ENCODE measurements at regions of chr2 and their contacts with region 1.

Region 1: DNA sequence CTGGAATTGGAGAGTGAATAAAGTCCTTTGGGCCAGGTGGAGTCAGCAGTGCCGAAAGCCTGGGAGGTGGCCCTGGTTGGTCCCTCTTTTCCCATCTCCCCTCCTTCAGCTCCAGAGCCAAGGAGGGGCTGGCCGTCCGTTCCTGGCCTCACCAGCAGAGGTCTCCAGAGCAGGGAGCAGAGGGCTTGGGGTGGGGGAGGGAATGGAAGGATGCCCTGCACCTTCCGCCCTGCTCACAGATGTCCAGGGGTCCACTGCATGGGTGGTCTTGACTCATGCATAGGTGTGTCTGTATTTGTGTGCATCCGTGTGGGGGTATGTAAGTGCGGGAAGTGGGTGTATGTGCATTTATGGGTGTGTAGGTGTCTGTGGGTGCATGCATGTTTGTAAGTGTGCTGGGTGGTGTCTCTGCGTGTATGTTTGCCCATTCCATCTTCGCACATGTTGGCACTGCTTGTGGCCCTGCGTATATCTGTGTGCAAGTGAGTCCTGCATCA is 201.8 kb downstream of the ZFP36L2 start:
- DNase-seq: peak; percentile 52 to 78 (median 71)
- H3K4me3 ChIP-seq: no peak overlapping the region
- H3K27ac ChIP-seq: peak overlapping the region in 1 of 5 donors; percentile 48
- H3K4me1 ChIP-seq: no peaks in the 10 kb centered on the region
- H3K27me3 ChIP-seq: no peaks in the 10 kb centered on the region
- CTCF ChIP-seq: peak; percentile 63 to 90 (median 80)
- POLR2A ChIP-seq: no peak

Region 2: DNA sequence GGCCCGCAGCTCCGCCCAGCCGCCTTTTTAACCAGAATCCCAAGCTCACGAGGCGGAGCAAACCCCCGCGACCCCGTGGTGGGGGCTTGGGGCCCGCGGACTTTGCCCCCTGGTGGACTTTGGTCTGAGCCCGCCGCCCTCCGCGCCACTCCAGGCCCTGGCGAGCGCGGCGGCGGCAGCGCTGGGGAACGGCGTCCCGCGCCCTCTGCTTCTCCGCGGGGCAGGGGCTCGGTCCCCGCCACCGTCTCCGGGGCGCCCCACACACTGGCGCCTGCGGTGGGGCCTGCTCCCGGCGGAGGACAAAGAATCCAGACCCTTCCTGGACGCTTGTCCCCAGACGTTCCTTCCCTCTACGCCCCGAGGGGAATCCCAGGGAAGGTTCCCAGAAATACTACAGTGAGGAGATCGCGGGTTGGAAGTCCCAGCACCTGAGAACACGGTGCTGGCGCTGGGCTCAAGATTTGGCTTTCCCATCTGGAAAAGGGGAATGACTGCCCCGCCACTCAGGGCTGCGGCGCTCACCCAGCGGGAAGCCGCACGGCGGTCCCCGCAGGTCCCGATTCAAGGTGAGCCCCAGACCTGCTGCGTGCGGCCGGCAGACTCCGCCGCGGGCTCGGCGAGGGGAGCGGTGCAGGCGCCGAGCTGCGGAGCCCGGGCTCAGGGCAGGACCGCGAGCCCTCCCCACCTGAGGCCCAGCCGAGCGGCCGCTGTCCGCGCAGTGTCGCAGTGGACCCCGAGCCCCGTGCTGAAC is 231.8 kb before region 1 on chr2 and contains the start of gene HAAO:
- intact Hi-C with region 1: no loop called
- DNase-seq: peak in 3 of 7 donors; percentile 31 to 47 (median 38)
- H3K4me3 ChIP-seq: peak within 1 kb of the TSS in 3 of 4 donors; percentile 30 to 72 (median 44)
- H3K27ac ChIP-seq: peak within 1 kb of the TSS in 4 of 5 donors; percentile 48 to 88 (median 71)
- H3K4me1 ChIP-seq: peaks cover 0 to 3% of the 10 kb centered on the region in 2 donors
- H3K27me3 ChIP-seq: no peaks in the 10 kb centered on the region
- CTCF ChIP-seq: peak in 2 of 6 experiments; percentile 18 to 22
- POLR2A ChIP-seq: peak in 1 of 2 donors; percentile 11
- total RNA-seq, gene HAAO: 3.1 to 30.1 (median 11.7) TPM

Region 3: GRCh38 chr2:42906557-42907411 is 117.8 kb before region 1 on chr2:
- intact Hi-C with region 1: no loop called
- DNase-seq: peak in 2 of 7 donors; percentile 29 to 78
- H3K4me3 ChIP-seq: no peak overlapping the region
- H3K27ac ChIP-seq: peak overlapping the region in 4 of 5 donors; percentile 19 to 71 (median 48)
- H3K4me1 ChIP-seq: peaks cover 0 to 39% of the 10 kb centered on the region in 2 donors
- H3K27me3 ChIP-seq: no peaks in the 10 kb centered on the region
- CTCF ChIP-seq: no peak
- POLR2A ChIP-seq: no peak

Region 4: DNA sequence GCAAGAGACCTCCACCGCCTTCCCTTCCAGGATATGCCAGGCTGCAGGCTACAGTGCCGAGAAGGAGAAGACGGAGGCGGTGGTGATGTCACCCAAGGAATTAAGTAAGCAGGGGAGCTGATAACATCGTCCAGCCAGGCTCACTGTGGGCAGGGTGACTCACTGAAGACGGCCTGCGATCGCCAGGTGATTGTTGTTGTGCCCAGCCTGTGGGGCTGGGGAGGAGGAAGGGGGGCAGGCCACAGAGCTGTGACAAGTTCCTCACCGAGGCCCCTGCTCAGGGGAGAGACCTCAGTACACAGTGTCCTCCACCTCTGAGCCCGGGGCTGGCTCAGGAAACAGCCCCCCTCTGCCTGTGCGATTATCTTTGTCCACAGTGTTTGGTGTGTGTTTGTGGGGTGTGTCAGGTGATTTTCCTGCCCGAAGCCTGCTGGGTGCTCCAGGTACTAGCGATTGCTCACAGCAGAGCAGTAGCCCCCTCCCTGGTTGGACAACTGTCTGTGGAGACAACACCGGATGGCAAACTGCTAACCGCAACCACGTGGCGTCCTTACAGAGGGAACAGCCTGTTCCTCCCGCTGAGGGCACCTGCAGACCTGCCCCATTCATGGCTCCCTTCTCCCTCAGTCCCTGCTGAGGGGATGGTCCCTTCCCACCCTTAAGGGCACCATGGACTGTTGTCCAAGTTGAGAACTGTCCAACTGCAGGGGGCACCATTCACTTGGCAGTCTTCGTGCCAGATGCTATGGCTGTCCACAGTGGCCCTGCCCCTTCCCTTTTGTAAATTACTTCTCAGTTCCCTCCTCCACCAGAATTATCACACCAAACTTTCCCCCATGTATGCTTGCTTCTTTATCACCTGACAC is 106.7 kb after region 1 on chr2:
- intact Hi-C with region 1: loop called in 1 of 2 experiments (anchors 10 kb)
- DNase-seq: peak; percentile 77 to 94 (median 93)
- H3K4me3 ChIP-seq: no peak overlapping the region
- H3K27ac ChIP-seq: peak overlapping the region; percentile 26 to 88 (median 71)
- H3K4me1 ChIP-seq: peaks cover 10 to 54% of the 10 kb centered on the region in 2 donors
- H3K27me3 ChIP-seq: no peaks in the 10 kb centered on the region
- CTCF ChIP-seq: peak in 5 of 6 experiments; percentile 42 to 69 (median 46)
- POLR2A ChIP-seq: peak in 1 of 2 donors; percentile 12

Region 5: DNA sequence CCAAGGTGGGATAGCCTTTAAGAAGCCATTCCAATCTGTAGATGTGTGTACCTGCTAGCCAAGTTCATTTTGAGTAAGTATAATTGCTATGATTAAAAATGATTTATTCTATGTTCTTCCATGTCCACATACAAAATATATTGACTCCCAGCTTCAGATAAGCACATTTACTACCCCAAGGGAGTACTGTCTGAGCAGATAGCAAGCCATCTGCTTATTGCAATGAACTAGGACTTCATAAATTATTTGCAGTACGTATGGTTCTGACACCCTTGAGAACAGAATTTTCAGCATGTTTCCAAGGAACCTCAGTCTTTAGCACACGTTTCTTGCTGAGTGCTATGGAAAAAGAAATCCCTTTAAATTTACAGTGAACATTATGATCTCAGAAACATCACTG is 785.9 kb after region 1 on chr2:
- intact Hi-C with region 1: no loop called
- DNase-seq: no peak
- H3K4me3 ChIP-seq: no peak overlapping the region
- H3K27ac ChIP-seq: no peak overlapping the region
- H3K4me1 ChIP-seq: no peaks in the 10 kb centered on the region
- H3K27me3 ChIP-seq: no peaks in the 10 kb centered on the region
- CTCF ChIP-seq: no peak
- POLR2A ChIP-seq: no peak